Activated CD4-positive, alpha-beta memory T cell treated with anti-CD3 and anti-CD28 coated beads for 36 hours (primary cell): ENCODE measurements at regions of chr13 and their contacts with region 1.

Region 1: DNA sequence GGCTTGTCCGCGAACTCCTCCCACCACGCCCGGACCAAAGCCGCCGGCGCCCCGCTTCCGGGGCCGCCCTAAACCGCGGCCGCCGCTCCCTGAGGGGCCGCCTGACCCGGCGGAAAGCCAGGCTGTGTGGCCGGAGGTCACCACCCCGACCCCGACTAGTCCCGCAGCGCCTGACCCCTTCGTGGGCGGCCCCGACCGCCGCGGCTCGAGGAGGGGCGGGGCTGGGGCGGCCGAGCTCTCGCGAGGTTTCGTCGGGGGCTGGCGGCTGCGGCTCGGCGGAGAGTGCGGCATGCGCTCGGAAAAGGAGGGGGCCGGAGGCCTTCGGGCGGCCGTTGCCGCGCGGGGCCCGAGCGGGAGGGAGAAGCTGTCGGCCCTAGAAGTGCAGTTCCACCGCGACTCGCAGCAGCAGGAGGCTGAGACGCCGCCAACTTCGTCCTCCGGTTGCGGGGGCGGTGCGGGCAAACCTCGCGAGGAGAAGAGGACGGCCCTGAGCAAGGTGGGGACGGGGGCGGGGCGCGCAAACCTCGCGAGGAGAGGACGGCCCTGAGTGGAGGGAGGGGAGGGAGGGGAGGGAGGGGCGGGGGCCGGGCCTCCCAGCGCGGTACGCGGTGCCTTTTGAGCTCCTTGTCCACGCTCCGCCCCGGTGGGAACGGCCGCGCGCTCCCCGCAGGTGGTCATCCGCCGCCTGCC is at the start of gene UPF3A:
- DNase-seq: peak; percentile 92
- H3K4me3 Mint-ChIP-seq: peak within 1 kb of the TSS; percentile 90
- H3K27ac Mint-ChIP-seq: peak within 1 kb of the TSS; percentile 100
- H3K4me1 Mint-ChIP-seq: peaks cover 44% of the 10 kb centered on the region
- H3K27me3 Mint-ChIP-seq: no peaks in the 10 kb centered on the region
- total RNA-seq, gene UPF3A: 46.8 to 48.5 TPM

Region 2: DNA sequence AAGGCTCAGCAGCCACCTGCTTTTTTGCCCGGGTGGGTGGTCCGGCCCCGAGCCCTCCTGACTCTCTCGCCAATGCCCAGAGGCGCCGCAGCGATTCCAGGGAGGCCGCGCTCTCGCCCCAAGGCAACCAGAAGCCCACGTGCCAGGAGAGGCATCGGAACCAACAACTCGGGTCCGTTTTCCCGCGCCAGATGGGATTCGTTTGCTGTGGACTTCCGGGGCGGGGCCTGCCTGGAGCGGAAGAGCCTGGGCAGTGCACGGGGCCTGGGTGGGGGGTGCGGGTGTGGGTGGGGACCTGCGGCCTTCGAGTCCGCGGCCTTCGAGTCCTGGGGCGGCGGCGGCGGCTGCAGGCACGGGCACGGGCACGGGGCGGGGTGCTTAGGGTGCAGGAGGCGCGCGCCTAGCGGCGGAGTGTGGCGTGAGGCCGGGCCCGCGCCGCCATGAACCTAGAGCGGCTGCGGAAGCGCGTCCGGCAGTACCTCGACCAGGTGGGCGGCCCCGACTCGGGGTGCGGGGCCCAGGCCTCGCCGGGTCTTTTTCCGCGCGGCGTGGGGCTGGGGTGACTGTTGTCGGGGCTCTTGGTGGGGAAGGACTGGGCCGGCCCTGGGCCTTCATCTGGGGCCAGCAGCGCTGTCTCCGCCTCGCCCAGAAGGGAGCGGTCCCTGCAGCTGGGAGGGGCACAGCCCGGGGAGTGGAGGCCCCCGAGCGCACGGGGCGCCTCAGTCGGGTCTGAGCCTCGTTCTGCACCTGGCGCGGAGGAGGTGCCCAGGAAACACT is 46.7 kb before region 1 on chr13 and contains the start of gene CDC16:
- CTCF ChIA-PET with region 1: interaction called, 3 read pairs
- POLR2A ChIA-PET with region 1: no interaction called
- intact Hi-C with region 1: loop called (anchors 2 kb)
- DNase-seq: peak; percentile 92
- H3K4me3 Mint-ChIP-seq: peak within 1 kb of the TSS; percentile 91
- H3K27ac Mint-ChIP-seq: peak within 1 kb of the TSS; percentile 73
- H3K4me1 Mint-ChIP-seq: peaks cover 31% of the 10 kb centered on the region
- H3K27me3 Mint-ChIP-seq: peaks cover 3% of the 10 kb centered on the region
- total RNA-seq, gene CDC16: 63.1 to 69.8 TPM

Region 3: DNA sequence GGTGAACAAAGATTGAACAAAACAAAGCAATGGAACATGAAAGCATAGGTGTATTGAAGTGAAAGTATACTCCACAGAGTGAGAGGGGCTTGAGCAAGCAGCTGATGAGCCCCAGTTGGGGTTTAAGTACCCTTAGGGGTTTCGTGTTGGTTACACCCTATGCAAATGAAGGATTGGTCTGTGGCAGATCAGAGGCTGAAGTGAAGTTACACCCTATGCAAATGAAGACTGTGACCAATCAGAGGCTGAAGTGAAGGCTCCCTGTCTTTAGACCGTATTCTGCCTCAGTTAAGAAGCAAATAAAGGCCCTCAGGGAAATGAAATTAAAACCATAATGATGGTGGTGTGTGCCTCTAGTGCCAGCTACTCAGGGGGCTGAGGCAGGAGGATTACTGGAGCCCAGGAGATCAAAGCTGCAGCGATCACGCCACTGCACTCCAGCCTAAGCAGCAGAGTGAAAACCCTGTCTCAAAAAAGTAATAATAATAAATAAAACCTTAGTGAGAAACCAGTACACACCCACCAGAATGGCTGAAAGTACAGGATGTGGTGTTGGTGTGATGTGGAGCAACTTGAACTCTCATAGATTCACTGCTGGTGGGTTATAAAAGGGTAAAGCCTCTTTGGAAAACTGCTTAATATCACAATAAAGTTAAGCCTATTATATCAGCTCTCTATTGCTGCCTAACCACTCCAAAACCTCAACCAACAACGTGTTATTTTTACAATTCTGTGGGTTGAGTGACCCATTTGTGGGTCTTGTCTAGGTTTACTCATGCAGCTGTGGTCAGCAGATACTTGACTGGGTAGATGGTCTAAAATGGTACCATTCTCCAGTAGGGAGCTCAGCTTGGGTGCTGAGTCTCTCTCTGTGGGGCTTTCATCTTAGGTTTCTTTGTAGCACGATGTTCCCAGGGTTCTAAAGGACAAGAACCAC is 12.9 kb before region 1 on chr13:
- CTCF ChIA-PET with region 1: no interaction called
- POLR2A ChIA-PET with region 1: interaction called, 6 read pairs
- intact Hi-C with region 1: loop called (anchors 1 kb)
- DNase-seq: peak; percentile 39
- H3K4me3 Mint-ChIP-seq: no peak overlapping the region
- H3K27ac Mint-ChIP-seq: peak overlapping the region; percentile 85
- H3K4me1 Mint-ChIP-seq: peaks cover 29% of the 10 kb centered on the region
- H3K27me3 Mint-ChIP-seq: no peaks in the 10 kb centered on the region

Region 4: DNA sequence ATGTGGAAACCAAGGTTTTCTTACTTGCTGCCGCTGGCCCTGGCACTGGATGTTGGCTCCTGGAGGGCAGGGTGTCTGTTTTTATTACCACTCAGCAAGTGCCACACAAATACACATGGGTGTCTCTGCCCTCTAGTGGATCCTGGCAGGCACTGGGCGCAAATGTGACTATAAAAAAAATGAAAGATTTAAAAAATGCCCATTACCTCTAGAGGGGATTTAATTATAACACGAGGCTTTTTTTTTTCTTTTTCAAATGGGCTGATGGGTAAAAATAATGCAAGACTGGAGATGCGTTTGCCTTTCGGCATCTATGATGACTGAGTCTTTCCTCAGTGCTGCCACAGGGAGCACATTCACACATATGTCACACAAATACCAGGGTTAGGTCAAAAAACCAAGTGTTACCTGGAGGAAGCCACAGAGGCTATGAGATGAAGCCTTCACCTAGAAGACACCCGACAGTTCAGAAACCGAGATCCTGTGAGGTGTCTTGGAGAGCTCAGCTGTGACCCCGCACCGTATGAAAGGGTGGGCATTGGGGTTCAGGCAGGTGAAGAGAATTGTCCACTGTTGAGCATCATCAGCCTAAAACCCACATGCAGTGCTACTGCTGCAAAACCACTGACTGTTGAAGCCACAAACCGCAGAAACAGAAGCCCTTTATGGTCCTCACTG is 58.5 kb after region 1 on chr13:
- CTCF ChIA-PET with region 1: interaction called, 16 read pairs
- POLR2A ChIA-PET with region 1: no interaction called
- intact Hi-C with region 1: no loop called
- DNase-seq: peak; percentile 63
- H3K4me3 Mint-ChIP-seq: peak overlapping the region; percentile 23
- H3K27ac Mint-ChIP-seq: no peak overlapping the region
- H3K4me1 Mint-ChIP-seq: peaks cover 13% of the 10 kb centered on the region
- H3K27me3 Mint-ChIP-seq: peaks cover 2% of the 10 kb centered on the region